PC-3 (cell line): ENCODE measurements at regions of chr6 and their contacts with region 1.

Region 1: GRCh38 chr6:2441601-2442475 is 196.4 kb upstream of the GMDS start:
- DNase-seq: peak; percentile 71
- ATAC-seq: peak; percentile 94
- H3K4me3 ChIP-seq: no peak overlapping the region
- H3K27ac ChIP-seq: peak overlapping the region; percentile 57
- H3K4me1 ChIP-seq: peaks cover 16% of the 10 kb centered on the region
- H3K27me3 ChIP-seq: no peaks in the 10 kb centered on the region
- CTCF ChIP-seq: no peak

Region 2: GRCh38 chr6:2376429-2377355 is 65.1 kb before region 1 on chr6:
- CTCF ChIA-PET with region 1: no interaction called
- POLR2A ChIA-PET with region 1: no interaction called
- intact Hi-C with region 1: loop called (anchors 2 kb)
- DNase-seq: peak; percentile 94
- ATAC-seq: peak; percentile 91
- H3K4me3 ChIP-seq: 0 out of 2 replicates have a peak overlapping the region, but pooled peaks have one; percentile 6
- H3K27ac ChIP-seq: peak overlapping the region; percentile 84
- H3K4me1 ChIP-seq: peaks cover 35% of the 10 kb centered on the region
- H3K27me3 ChIP-seq: no peaks in the 10 kb centered on the region
- CTCF ChIP-seq: no peak

Region 3: DNA sequence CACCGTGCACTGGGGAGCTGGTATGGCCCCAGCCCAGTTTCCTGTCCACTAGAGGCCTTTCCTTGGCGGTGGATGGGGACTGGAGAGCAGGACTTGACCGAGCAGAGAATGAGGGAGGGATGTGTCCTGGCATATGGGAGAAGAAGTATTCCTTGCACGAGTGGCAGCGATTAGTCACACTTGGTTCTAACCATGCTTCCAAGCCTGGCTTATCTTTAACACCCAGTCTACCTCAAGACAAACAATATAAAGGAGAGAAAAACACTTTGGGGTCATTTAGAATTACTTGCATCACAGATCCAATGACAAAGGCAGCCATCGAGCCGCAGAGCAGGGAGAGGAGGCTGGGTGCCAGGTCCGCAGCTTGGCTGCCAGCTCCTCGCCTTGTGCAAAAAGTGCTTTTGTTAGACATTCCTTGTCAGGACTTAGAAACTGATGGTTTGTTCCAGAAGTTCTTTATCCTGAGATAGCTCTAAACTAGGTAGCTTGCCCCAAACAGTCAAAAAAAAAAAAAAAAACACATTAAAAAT is 18.4 kb after region 1 on chr6:
- CTCF ChIA-PET with region 1: no interaction called
- POLR2A ChIA-PET with region 1: no interaction called
- intact Hi-C with region 1: no loop called
- DNase-seq: no peak
- ATAC-seq: no peak
- H3K4me3 ChIP-seq: no peak overlapping the region
- H3K27ac ChIP-seq: no peak overlapping the region
- H3K4me1 ChIP-seq: no peaks in the 10 kb centered on the region
- H3K27me3 ChIP-seq: no peaks in the 10 kb centered on the region
- CTCF ChIP-seq: no peak

Region 4: GRCh38 chr6:2524090-2524489 is 82.3 kb after region 1 on chr6:
- CTCF ChIA-PET with region 1: no interaction called
- POLR2A ChIA-PET with region 1: no interaction called
- intact Hi-C with region 1: loop called (anchors 5 kb)
- DNase-seq: peak; percentile 24
- ATAC-seq: no peak
- H3K4me3 ChIP-seq: no peak overlapping the region
- H3K27ac ChIP-seq: no peak overlapping the region
- H3K4me1 ChIP-seq: peaks cover 13% of the 10 kb centered on the region
- H3K27me3 ChIP-seq: no peaks in the 10 kb centered on the region
- CTCF ChIP-seq: peak; percentile 59